ENCODE measurements at regions of chr5 and their contacts with region 1.

Region 1: GRCh38 chr5:174418928-174419796 is 305.2 kb upstream of the MSX2 start:
- DNase-seq: peak; percentile 88 to 95 (median 94)
- ATAC-seq: peak; percentile 88 to 94
- H3K4me3 ChIP-seq: no peak overlapping the region
- H3K27ac ChIP-seq: no peak overlapping the region
- H3K4me1 ChIP-seq: no peaks in the 10 kb centered on the region
- H3K27me3 ChIP-seq: peaks cover 3% of the 10 kb centered on the region

Region 2: DNA sequence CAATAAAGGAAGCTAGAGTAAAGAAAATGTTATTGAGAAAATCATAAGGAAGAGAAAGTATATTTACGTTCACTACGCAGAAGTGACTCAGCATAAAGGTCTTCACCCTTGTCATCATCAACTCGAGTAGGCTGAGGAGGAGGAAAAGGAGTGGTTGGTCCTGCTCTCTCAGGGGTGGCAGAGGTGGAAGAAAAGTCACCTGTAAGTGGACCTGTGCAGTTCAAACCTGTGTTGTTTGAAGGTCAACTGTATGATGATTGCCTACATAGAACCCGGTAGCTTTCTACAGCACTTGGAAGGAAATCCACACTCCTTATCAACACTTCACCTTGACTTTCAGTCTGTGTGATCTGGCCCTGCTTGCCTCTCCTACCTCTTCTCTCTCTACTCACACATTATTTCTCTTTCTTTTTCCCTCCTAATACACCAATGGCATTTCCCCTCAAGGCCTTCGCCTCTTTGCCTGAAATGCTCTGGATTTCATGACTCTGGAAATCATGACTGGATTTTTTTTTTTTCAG is 640.3 kb before region 1 on chr5:
- intact Hi-C with region 1: no loop called
- DNase-seq: no peak
- ATAC-seq: no peak
- H3K4me3 ChIP-seq: no peak overlapping the region
- H3K27ac ChIP-seq: no peak overlapping the region
- H3K4me1 ChIP-seq: peaks cover 3% of the 10 kb centered on the region
- H3K27me3 ChIP-seq: no peaks in the 10 kb centered on the region

Region 3: DNA sequence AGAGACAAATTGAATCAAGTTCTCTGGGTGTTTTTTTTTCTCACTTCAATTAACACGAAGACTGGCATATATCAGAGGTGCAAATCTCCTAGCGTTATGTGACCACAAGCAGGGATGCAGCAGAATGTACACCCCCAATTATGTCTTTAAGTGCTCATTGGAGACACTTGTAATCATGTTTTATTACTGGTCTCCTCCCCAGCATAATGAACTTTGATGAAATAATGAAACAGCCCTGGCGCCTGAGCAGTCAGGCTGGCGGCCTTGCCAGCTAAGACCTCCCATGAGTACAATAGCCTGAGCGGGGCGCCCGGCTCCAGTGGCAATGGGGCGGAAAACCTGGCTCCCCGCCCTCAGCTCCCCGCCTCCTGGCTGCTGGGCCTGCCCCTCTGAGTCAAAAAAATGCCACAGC is 95.8 kb after region 1 on chr5:
- intact Hi-C with region 1: no loop called
- DNase-seq: no peak
- ATAC-seq: no peak
- H3K4me3 ChIP-seq: no peak overlapping the region
- H3K27ac ChIP-seq: no peak overlapping the region
- H3K4me1 ChIP-seq: no peaks in the 10 kb centered on the region
- H3K27me3 ChIP-seq: no peaks in the 10 kb centered on the region

Region 4: DNA sequence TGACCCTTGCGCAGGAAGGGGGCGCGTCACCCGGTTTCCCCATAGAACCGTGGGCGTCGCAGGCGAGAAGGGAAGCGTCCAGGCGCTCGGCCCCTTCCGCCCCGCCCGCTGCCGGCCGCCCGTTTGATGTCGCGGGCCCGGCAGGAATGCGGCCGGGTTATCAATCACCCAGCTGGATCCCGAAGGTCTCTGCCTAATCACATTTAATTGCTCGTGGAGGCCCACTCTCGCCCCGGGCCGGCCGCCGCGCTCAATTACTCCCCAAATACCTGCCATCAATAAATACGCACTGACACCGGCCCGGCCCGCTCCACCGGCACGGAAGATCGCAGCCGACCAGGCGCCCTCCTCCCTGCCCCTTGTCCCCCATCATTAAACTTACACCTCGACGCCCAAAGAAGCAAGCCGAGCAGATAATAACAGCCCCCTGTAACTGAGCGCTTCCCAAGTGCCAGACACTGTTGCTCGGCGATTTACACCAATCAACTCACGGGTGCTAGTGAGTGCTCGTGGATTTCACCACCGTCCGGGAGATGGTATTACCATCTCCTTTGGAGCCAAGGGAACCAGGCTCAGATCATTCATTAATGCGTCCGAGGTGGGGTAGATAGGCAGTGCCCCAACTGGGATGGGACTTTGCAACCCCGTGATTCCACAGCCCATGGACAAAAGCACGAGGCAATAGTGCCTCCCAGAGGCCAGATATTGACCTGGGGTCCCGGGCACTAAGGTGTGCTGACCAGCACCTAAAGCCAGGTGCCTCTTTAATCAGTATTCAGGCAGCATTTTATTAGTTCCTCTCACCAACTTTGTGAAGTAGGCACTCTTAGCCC is 316.6 kb after region 1 on chr5:
- intact Hi-C with region 1: loop called in 1 of 4 experiments (anchors 10 kb)
- DNase-seq: no peak
- ATAC-seq: no peak
- H3K4me3 ChIP-seq: no peak overlapping the region
- H3K27ac ChIP-seq: no peak overlapping the region
- H3K4me1 ChIP-seq: no peaks in the 10 kb centered on the region
- H3K27me3 ChIP-seq: peaks cover 5% of the 10 kb centered on the region

Region 5: GRCh38 chr5:174935854-174936474 is 516.8 kb after region 1 on chr5:
- intact Hi-C with region 1: loop called in 1 of 4 experiments (anchors 5 kb)
- DNase-seq: peak; percentile 48 to 76 (median 72)
- ATAC-seq: peak; percentile 57 to 69
- H3K4me3 ChIP-seq: no peak overlapping the region
- H3K27ac ChIP-seq: no peak overlapping the region
- H3K4me1 ChIP-seq: no peaks in the 10 kb centered on the region
- H3K27me3 ChIP-seq: peaks cover 2% of the 10 kb centered on the region

Measured in right cardiac atrium (tissue), 5 donors.